ENCODE measurements at regions of chr11 and their contacts with region 1.

Region 1: DNA sequence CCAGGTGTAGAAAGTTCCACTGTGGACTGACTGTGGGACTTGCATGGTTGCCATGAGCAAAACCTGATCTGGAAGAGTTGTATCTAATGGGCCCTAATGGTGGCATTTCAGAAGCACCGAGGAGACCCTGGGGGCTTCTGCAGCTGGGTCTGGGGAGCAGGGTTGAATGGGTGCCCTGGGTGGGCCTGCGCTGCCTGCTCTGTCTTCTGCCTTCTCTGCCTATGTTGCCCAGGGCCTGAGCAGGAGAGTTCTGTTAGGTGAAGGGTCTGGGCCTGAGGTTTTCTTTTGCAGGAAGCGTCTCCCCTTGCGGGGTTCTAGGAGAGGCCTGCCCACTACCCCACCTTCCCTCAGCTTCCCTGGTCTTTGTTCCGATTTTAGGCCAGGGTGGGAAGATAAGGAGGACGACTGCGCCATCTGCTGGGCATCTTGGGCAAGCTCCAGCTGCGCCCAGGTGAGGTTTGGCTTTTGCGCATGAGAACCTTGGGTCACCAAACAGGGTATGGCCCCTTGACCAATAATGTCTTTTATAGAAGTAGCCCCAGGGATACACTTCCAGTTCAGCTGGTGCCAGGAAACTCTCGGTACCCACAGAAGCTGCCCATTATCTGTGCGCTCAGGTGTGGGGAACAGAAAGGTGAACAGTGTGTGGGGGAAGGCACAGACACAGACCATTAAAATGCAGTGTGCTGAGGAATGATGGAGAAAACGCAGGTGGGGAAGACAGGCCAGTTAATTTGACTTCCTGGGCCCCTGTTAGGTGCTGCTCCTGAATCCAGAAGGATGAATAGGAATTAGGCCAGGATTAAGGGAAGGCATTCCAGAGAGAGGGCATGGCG is 23.2 kb downstream of the COMMD9 start:
- DNase-seq: peak in 4 of 6 donors; percentile 28 to 84 (median 66)
- ATAC-seq: peak; percentile 79 to 84 (median 83)
- H3K4me3 ChIP-seq: no peak overlapping the region
- H3K27ac ChIP-seq: peak overlapping the region in 1 of 4 donors; percentile 6
- H3K4me1 ChIP-seq: peaks cover 3 to 23% (median 10%) of the 10 kb centered on the region in 3 donors
- H3K27me3 ChIP-seq: no peaks in the 10 kb centered on the region
- CTCF ChIP-seq: peak; percentile 69 to 83 (median 78)

Region 2: GRCh38 chr11:35822815-35823495 is 443.1 kb before region 1 on chr11:
- intact Hi-C with region 1: loop called in 1 of 3 experiments (anchors 10 kb)
- DNase-seq: no peak
- ATAC-seq: no peak
- H3K4me3 ChIP-seq: no peak overlapping the region
- H3K27ac ChIP-seq: no peak overlapping the region
- H3K4me1 ChIP-seq: peaks cover 0 to 18% (median 14%) of the 10 kb centered on the region in 3 donors
- H3K27me3 ChIP-seq: no peaks in the 10 kb centered on the region
- CTCF ChIP-seq: no peak

Measured in pancreas (tissue), 10 donors.